Heart left ventricle (tissue), 16 donors: ENCODE measurements at regions of chr3 and their contacts with region 1.

Region 1: GRCh38 chr3:186236357-186237020 is 125.5 kb downstream of the DGKG start:
- DNase-seq: no peak
- ATAC-seq: peak; percentile 58 to 85 (median 70)
- H3K4me3 ChIP-seq: no peak overlapping the region
- H3K27ac ChIP-seq: peak overlapping the region; percentile 4 to 86 (median 56)
- H3K4me1 ChIP-seq: peaks cover 0 to 45% (median 13%) of the 10 kb centered on the region in 12 donors
- H3K27me3 ChIP-seq: no peaks in the 10 kb centered on the region
- CTCF ChIP-seq: no peak
- POLR2A ChIP-seq: no peak

Region 2: GRCh38 chr3:186217820-186218164 is 18.7 kb before region 1 on chr3:
- intact Hi-C with region 1: loop called in 1 of 10 experiments (anchors 2 kb)
- DNase-seq: no peak
- ATAC-seq: peak in 3 of 4 donors; percentile 32 to 67 (median 45)
- H3K4me3 ChIP-seq: no peak overlapping the region
- H3K27ac ChIP-seq: peak overlapping the region in 10 of 12 donors; percentile 25 to 70 (median 52)
- H3K4me1 ChIP-seq: peaks cover 0 to 61% (median 21%) of the 10 kb centered on the region in 12 donors
- H3K27me3 ChIP-seq: no peaks in the 10 kb centered on the region
- CTCF ChIP-seq: no peak
- POLR2A ChIP-seq: no peak